Transverse colon (tissue), 4 donors: ENCODE measurements at regions of chr10 and their contacts with region 1.

Region 1: GRCh38 chr10:111084366-111085255 is 7.8 kb downstream of the ADRA2A start:
- DNase-seq: no peak
- H3K4me3 ChIP-seq: no peak overlapping the region
- H3K27ac ChIP-seq: no peak overlapping the region
- H3K4me1 ChIP-seq: peaks cover 0 to 8% (median 3%) of the 10 kb centered on the region in 4 donors
- H3K27me3 ChIP-seq: no peaks in the 10 kb centered on the region
- CTCF ChIP-seq: no peak
- EP300 ChIP-seq: no peak
- POLR2A ChIP-seq: no peak

Region 2: GRCh38 chr10:110995301-110995700 is 89.3 kb before region 1 on chr10:
- in situ Hi-C with region 1: no loop called
- intact Hi-C with region 1: no loop called
- DNase-seq: no peak
- H3K4me3 ChIP-seq: no peak overlapping the region
- H3K27ac ChIP-seq: no peak overlapping the region
- H3K4me1 ChIP-seq: peaks cover 0 to 10% (median 0%) of the 10 kb centered on the region in 4 donors
- H3K27me3 ChIP-seq: no peaks in the 10 kb centered on the region
- CTCF ChIP-seq: no peak
- EP300 ChIP-seq: no peak
- POLR2A ChIP-seq: no peak

Region 3: GRCh38 chr10:111171183-111171582 is 86.6 kb after region 1 on chr10:
- in situ Hi-C with region 1: no loop called
- intact Hi-C with region 1: no loop called
- DNase-seq: no peak
- H3K4me3 ChIP-seq: no peak overlapping the region
- H3K27ac ChIP-seq: no peak overlapping the region
- H3K4me1 ChIP-seq: no peaks in the 10 kb centered on the region
- H3K27me3 ChIP-seq: no peaks in the 10 kb centered on the region
- CTCF ChIP-seq: no peak
- EP300 ChIP-seq: no peak
- POLR2A ChIP-seq: no peak

Region 4: GRCh38 chr10:111207500-111207899 is 122.9 kb after region 1 on chr10:
- in situ Hi-C with region 1: loop called in 1 of 4 experiments (anchors 10 kb)
- intact Hi-C with region 1: no loop called
- DNase-seq: peak; percentile 67
- H3K4me3 ChIP-seq: no peak overlapping the region
- H3K27ac ChIP-seq: no peak overlapping the region
- H3K4me1 ChIP-seq: peaks cover 0 to 6% (median 0%) of the 10 kb centered on the region in 4 donors
- H3K27me3 ChIP-seq: no peaks in the 10 kb centered on the region
- CTCF ChIP-seq: peak; percentile 25 to 77 (median 51)
- EP300 ChIP-seq: no peak
- POLR2A ChIP-seq: no peak